Naive thymus-derived CD4-positive, alpha-beta T cell (primary cell): ENCODE measurements at regions of chr11 and their contacts with region 1.

Region 1: GRCh38 chr11:62855571-62856332 is 16.4 kb upstream of the WDR74 start:
- DNase-seq: peak; percentile 96 to 100 (median 99)
- ATAC-seq: peak; percentile 97
- H3K4me3 ChIP-seq: peak overlapping the region; percentile 97
- H3K4me3 Mint-ChIP-seq: peak overlapping the region; percentile 93 to 100 (median 98)
- H3K27ac ChIP-seq: peak overlapping the region; percentile 85
- H3K27ac Mint-ChIP-seq: peak overlapping the region; percentile 86 to 98 (median 94)
- H3K4me1 ChIP-seq: peaks cover 33 to 39% of the 10 kb centered on the region in 2 donors
- H3K4me1 Mint-ChIP-seq: peaks cover 34 to 77% (median 46%) of the 10 kb centered on the region in 7 donors
- H3K27me3 ChIP-seq: no peaks in the 10 kb centered on the region
- H3K27me3 Mint-ChIP-seq: peaks cover 0 to 6% (median 0%) of the 10 kb centered on the region in 5 donors

Region 2: GRCh38 chr11:62601394-62602140 is 254.2 kb before region 1 on chr11 and contains the start of gene MTA2:
- CTCF ChIA-PET with region 1: interaction called, 3 read pairs
- POLR2A ChIA-PET with region 1: interaction called, 12 read pairs
- intact Hi-C with region 1: loop called (anchors 2 to 5 kb)
- DNase-seq: peak; percentile 98 to 100 (median 100)
- ATAC-seq: peak; percentile 85
- H3K4me3 ChIP-seq: peak within 1 kb of the TSS; percentile 71
- H3K4me3 Mint-ChIP-seq: peak within 1 kb of the TSS; percentile 85 to 99 (median 94)
- H3K27ac ChIP-seq: peak within 1 kb of the TSS; percentile 98
- H3K27ac Mint-ChIP-seq: peak within 1 kb of the TSS; percentile 90 to 98 (median 97)
- H3K4me1 ChIP-seq: peaks cover 16 to 23% of the 10 kb centered on the region in 2 donors
- H3K4me1 Mint-ChIP-seq: peaks cover 43 to 64% (median 54%) of the 10 kb centered on the region in 7 donors
- H3K27me3 ChIP-seq: no peaks in the 10 kb centered on the region
- H3K27me3 Mint-ChIP-seq: no peaks in the 10 kb centered on the region
- total RNA-seq, gene MTA2: 134 to 238 (median 199) TPM

Region 3: GRCh38 chr11:62671575-62672389 is 184.0 kb before region 1 on chr11 and contains the starts of genes LBHD1 and UQCC3:
- CTCF ChIA-PET with region 1: no interaction called
- POLR2A ChIA-PET with region 1: interaction called, 10 read pairs
- intact Hi-C with region 1: loop called in 1 of 2 experiments (anchors 5 kb)
- DNase-seq: peak; percentile 49 to 80 (median 73)
- ATAC-seq: peak; percentile 85
- H3K4me3 ChIP-seq: peak within 1 kb of the TSS; percentile 62
- H3K4me3 Mint-ChIP-seq: peak within 1 kb of the TSS; percentile 94 to 100 (median 99)
- H3K27ac ChIP-seq: peak within 1 kb of the TSS; percentile 90
- H3K27ac Mint-ChIP-seq: peak within 1 kb of the TSS; percentile 91 to 97 (median 96)
- H3K4me1 ChIP-seq: peaks cover 12 to 25% of the 10 kb centered on the region in 2 donors
- H3K4me1 Mint-ChIP-seq: peaks cover 12 to 62% (median 51%) of the 10 kb centered on the region in 7 donors
- H3K27me3 ChIP-seq: no peaks in the 10 kb centered on the region
- H3K27me3 Mint-ChIP-seq: no peaks in the 10 kb centered on the region
- total RNA-seq, gene LBHD1: 13.8 to 26.4 (median 20.8) TPM
- total RNA-seq, gene UQCC3: 2.2 to 8.2 (median 5.8) TPM

Region 4: GRCh38 chr11:62771144-62772021 is 84.4 kb before region 1 on chr11 and contains the start of gene TAF6L:
- CTCF ChIA-PET with region 1: interaction called, 6 read pairs
- POLR2A ChIA-PET with region 1: interaction called, 33 read pairs
- intact Hi-C with region 1: no loop called
- DNase-seq: peak; percentile 80 to 98 (median 82)
- ATAC-seq: peak; percentile 92
- H3K4me3 ChIP-seq: peak within 1 kb of the TSS; percentile 66
- H3K4me3 Mint-ChIP-seq: peak within 1 kb of the TSS; percentile 88 to 98 (median 94)
- H3K27ac ChIP-seq: peak within 1 kb of the TSS; percentile 82
- H3K27ac Mint-ChIP-seq: peak within 1 kb of the TSS; percentile 89 to 97 (median 94)
- H3K4me1 ChIP-seq: peaks cover 10 to 13% of the 10 kb centered on the region in 2 donors
- H3K4me1 Mint-ChIP-seq: peaks cover 17 to 37% (median 27%) of the 10 kb centered on the region in 7 donors
- H3K27me3 ChIP-seq: no peaks in the 10 kb centered on the region
- H3K27me3 Mint-ChIP-seq: no peaks in the 10 kb centered on the region
- total RNA-seq, gene TAF6L: 13.1 to 34.9 (median 24.1) TPM

Region 5: GRCh38 chr11:62799486-62799885 is 56.3 kb before region 1 on chr11:
- CTCF ChIA-PET with region 1: interaction called, 4 read pairs
- POLR2A ChIA-PET with region 1: interaction called, 34 read pairs
- intact Hi-C with region 1: no loop called
- DNase-seq: no peak
- ATAC-seq: no peak
- H3K4me3 ChIP-seq: no peak overlapping the region
- H3K4me3 Mint-ChIP-seq: no peak overlapping the region
- H3K27ac ChIP-seq: no peak overlapping the region
- H3K27ac Mint-ChIP-seq: peak overlapping the region in 4 of 9 donors; percentile 14 to 80 (median 46)
- H3K4me1 ChIP-seq: peaks cover 11 to 13% of the 10 kb centered on the region in 2 donors
- H3K4me1 Mint-ChIP-seq: peaks cover 13 to 33% (median 30%) of the 10 kb centered on the region in 7 donors
- H3K27me3 ChIP-seq: no peaks in the 10 kb centered on the region
- H3K27me3 Mint-ChIP-seq: no peaks in the 10 kb centered on the region

Region 6: GRCh38 chr11:62831520-62832335 is 24.0 kb before region 1 on chr11 and contains the start of gene STX5:
- CTCF ChIA-PET with region 1: interaction called, 5 read pairs
- POLR2A ChIA-PET with region 1: interaction called, 122 read pairs
- intact Hi-C with region 1: loop called in 1 of 2 experiments (anchors 1 kb)
- DNase-seq: peak; percentile 96 to 100 (median 99)
- ATAC-seq: peak; percentile 98
- H3K4me3 ChIP-seq: peak within 1 kb of the TSS; percentile 95
- H3K4me3 Mint-ChIP-seq: peak within 1 kb of the TSS; percentile 87 to 99 (median 96)
- H3K27ac ChIP-seq: peak within 1 kb of the TSS; percentile 99
- H3K27ac Mint-ChIP-seq: peak within 1 kb of the TSS; percentile 93 to 100 (median 99)
- H3K4me1 ChIP-seq: peaks cover 16% of the 10 kb centered on the region in 2 donors
- H3K4me1 Mint-ChIP-seq: peaks cover 15 to 57% (median 45%) of the 10 kb centered on the region in 7 donors
- H3K27me3 ChIP-seq: no peaks in the 10 kb centered on the region
- H3K27me3 Mint-ChIP-seq: no peaks in the 10 kb centered on the region
- total RNA-seq, gene STX5: 47.0 to 152 (median 57.3) TPM